ENCODE measurements at regions of chr3 and their contacts with region 1.

Region 1: DNA sequence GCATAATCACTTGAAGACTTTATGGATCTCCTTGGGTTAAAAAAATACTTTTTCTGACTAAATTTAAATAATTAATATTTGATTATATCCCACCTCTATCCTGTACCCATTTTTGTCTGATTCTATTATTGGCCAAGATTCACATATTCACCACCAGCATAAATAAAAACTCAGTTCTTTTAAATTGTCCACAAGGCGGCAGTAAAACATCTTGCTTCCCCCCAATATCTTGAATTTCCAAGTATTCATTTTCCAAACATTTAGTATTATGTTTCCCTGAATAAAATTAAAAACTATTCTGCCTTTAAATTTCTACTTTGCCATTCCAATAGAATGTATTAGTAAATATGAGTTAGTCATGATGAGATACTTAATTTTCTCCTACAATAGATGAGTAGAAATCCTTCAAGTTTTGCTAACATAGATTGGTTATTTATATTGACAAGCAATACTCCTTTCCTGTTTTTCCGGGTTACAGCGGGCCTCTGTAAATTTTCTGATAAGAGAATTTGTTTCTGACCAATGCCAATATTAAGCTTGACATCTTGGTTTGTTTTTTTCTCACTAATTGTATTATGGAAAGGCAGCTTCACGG is 218.7 kb upstream of the MDFIC2 start:
- DNase-seq: no peak
- H3K4me3 Mint-ChIP-seq: no peak overlapping the region
- H3K27ac Mint-ChIP-seq: no peak overlapping the region
- H3K4me1 Mint-ChIP-seq: no peaks in the 10 kb centered on the region
- H3K27me3 Mint-ChIP-seq: peaks cover 30% of the 10 kb centered on the region
- CTCF ChIP-seq: no peak

Region 2: DNA sequence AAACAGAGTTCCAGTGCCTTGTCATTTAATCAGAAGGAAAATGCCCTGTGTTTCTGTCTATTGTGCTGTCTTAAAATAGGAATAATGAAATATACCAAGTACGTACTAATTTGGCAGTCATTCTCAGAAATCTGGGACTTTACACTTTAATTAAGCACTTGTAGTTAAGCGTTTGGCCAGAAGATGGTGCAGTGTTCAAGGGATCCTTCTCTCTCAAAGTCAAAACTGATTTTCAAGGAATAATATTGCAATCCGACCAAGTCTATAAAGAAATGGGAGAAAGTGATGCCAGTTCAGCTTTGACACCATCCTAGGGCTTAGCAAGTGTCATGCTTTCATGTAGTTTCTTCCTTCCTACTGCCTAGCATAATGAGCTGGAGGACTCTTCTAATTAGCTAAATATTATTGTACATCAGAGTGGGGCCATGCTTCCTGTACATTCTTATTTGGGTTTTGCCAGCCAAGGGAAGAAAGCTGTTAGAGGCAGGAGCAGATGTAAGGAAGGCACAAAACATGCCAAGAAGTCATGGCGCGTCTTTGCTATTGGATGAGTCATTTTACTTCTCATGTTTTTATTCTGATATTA is 466.9 kb before region 1 on chr3:
- CTCF ChIA-PET with region 1: no interaction called
- intact Hi-C with region 1: loop called (anchors 10 kb)
- DNase-seq: peak; percentile 42
- H3K4me3 Mint-ChIP-seq: no peak overlapping the region
- H3K27ac Mint-ChIP-seq: no peak overlapping the region
- H3K4me1 Mint-ChIP-seq: no peaks in the 10 kb centered on the region
- H3K27me3 Mint-ChIP-seq: peaks cover 24% of the 10 kb centered on the region
- CTCF ChIP-seq: peak; percentile 35

Region 3: GRCh38 chr3:70090322-70090913 is 440.7 kb before region 1 on chr3:
- CTCF ChIA-PET with region 1: no interaction called
- intact Hi-C with region 1: loop called (anchors 1 kb)
- DNase-seq: peak; percentile 17
- H3K4me3 Mint-ChIP-seq: no peak overlapping the region
- H3K27ac Mint-ChIP-seq: no peak overlapping the region
- H3K4me1 Mint-ChIP-seq: no peaks in the 10 kb centered on the region
- H3K27me3 Mint-ChIP-seq: no peaks in the 10 kb centered on the region
- CTCF ChIP-seq: peak; percentile 31

Region 4: GRCh38 chr3:70242297-70242882 is 288.8 kb before region 1 on chr3:
- CTCF ChIA-PET with region 1: no interaction called
- intact Hi-C with region 1: no loop called
- DNase-seq: no peak
- H3K4me3 Mint-ChIP-seq: no peak overlapping the region
- H3K27ac Mint-ChIP-seq: no peak overlapping the region
- H3K4me1 Mint-ChIP-seq: peaks cover 3% of the 10 kb centered on the region
- H3K27me3 Mint-ChIP-seq: no peaks in the 10 kb centered on the region
- CTCF ChIP-seq: no peak

Region 5: DNA sequence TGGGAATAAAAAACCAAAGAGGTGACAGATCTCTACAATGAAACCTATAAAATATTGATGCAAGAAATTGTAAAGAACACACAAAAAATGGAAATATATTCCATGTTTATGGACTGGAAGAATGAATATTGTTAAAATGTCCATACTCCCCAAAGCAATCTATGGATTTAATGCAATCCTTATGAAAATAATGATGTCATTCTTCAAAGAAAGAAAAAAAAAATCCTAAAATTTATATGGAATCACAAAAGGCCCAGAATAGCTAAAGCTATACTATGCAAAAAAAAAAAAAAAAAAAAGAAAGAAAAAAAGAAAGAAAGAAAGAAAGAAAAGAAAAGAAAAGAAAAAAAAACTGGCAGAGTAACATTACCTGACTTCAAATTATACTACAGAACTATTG is 74.2 kb before region 1 on chr3:
- CTCF ChIA-PET with region 1: no interaction called
- intact Hi-C with region 1: no loop called
- DNase-seq: no peak
- H3K4me3 Mint-ChIP-seq: no peak overlapping the region
- H3K27ac Mint-ChIP-seq: no peak overlapping the region
- H3K4me1 Mint-ChIP-seq: no peaks in the 10 kb centered on the region
- H3K27me3 Mint-ChIP-seq: peaks cover 48% of the 10 kb centered on the region
- CTCF ChIP-seq: no peak